ENCODE measurements at regions of chr18 and their contacts with region 1.

Region 1: DNA sequence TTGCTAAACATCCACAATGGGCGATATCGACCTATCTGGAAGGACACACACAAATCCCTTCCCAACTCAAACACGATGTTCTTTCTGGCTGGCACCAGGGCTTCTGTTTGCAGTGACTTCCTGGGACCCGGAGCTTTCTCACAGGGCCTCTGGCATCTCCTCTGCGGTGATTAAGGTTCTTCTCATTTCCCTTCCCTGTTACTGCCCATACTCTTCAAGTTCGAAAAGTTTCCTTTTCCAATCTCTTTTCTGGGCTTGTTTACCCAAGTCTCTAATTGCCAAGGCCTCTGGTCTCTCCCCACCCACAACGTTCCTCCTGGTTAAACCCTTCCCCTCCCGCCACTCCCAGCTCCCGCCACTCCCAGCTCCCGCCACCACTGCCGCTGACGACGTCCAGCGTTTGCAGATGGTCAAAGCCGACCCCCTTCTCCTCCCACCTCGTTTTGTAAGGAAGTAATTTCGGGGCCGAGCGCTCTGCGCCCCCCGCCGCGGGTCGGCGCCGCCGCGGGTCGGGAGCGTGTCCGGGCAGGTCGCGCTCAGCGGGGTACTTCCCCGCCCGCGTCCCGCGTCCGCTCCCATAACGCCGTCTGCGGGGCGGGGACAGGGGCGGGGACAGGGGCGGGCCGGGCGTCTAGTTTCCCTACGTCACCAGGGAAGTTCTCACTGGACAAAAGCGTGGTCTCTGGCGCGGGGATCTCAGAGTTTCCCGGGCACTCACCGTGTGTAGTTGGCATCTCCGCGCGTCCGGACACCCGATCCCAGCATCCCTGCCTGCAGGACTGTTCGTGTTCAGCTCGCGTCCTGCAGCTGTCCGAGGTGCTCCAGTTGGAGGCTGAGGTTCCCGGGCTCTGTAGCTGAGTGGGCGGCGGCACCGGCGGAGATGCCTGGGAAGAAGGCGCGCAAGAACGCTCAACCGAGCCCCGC is at the start of gene PMAIP1:
- DNase-seq: peak; percentile 94
- H3K4me3 Mint-ChIP-seq: peak within 1 kb of the TSS; percentile 96
- H3K27ac Mint-ChIP-seq: peak within 1 kb of the TSS; percentile 99
- H3K4me1 Mint-ChIP-seq: peaks cover 31% of the 10 kb centered on the region
- H3K27me3 Mint-ChIP-seq: no peaks in the 10 kb centered on the region
- total RNA-seq, gene PMAIP1: 97.6 to 104 TPM

Region 2: DNA sequence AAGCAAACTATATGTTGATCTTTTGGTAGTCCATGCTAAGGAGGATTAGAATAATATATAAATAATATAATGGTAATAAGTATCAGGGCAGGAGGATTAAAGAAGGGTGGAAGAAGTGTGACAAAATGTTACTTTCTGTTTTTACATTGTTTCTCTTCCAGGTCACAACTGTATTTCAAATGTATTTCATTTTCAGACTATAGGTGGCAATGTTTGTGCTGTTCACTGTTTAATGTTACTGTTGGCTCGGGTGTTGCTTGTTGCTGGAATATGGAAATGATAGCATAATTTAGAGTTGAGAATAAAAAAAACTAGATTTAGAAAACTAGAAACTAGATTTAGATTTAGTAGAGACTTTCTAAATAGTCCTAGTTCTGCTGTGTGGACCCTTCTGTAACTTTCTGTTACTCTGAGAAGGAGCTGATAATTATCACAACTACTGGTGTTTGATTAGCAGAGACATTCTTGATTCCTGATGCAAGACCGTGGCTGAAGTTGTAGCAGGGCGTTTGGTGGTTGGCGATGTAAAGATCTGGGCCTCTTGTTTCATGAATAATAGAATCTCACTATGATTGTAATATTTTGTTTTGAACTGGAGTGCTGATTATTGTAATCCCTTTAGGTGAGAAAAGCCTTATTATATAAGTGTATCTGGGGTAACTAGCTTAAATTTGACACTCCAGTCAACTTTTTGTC is 1847.6 kb before region 1 on chr18:
- CTCF ChIA-PET with region 1: no interaction called
- POLR2A ChIA-PET with region 1: no interaction called
- intact Hi-C with region 1: no loop called
- DNase-seq: no peak
- H3K4me3 Mint-ChIP-seq: no peak overlapping the region
- H3K27ac Mint-ChIP-seq: no peak overlapping the region
- H3K4me1 Mint-ChIP-seq: peaks cover 10% of the 10 kb centered on the region
- H3K27me3 Mint-ChIP-seq: no peaks in the 10 kb centered on the region

Region 3: GRCh38 chr18:59358712-59359575 is 540.6 kb before region 1 on chr18 and contains the start of gene LMAN1:
- CTCF ChIA-PET with region 1: no interaction called
- POLR2A ChIA-PET with region 1: interaction called, 7 read pairs
- intact Hi-C with region 1: loop called (anchors 1 kb)
- DNase-seq: peak; percentile 97
- H3K4me3 Mint-ChIP-seq: peak within 1 kb of the TSS; percentile 83
- H3K27ac Mint-ChIP-seq: peak within 1 kb of the TSS; percentile 94
- H3K4me1 Mint-ChIP-seq: peaks cover 26% of the 10 kb centered on the region
- H3K27me3 Mint-ChIP-seq: no peaks in the 10 kb centered on the region
- total RNA-seq, gene LMAN1: 155 to 158 TPM

Region 4: GRCh38 chr18:59846814-59847490 is 52.6 kb before region 1 on chr18:
- CTCF ChIA-PET with region 1: interaction called, 6 read pairs
- POLR2A ChIA-PET with region 1: interaction called, 11 read pairs
- intact Hi-C with region 1: loop called (anchors 1 kb)
- DNase-seq: peak; percentile 80
- H3K4me3 Mint-ChIP-seq: no peak overlapping the region
- H3K27ac Mint-ChIP-seq: peak overlapping the region; percentile 74
- H3K4me1 Mint-ChIP-seq: peaks cover 16% of the 10 kb centered on the region
- H3K27me3 Mint-ChIP-seq: peaks cover 1% of the 10 kb centered on the region

Region 5: GRCh38 chr18:59927246-59927825 is 27.8 kb after region 1 on chr18:
- CTCF ChIA-PET with region 1: interaction called, 5 read pairs
- POLR2A ChIA-PET with region 1: interaction called, 34 read pairs
- intact Hi-C with region 1: loop called (anchors 1 kb)
- DNase-seq: peak; percentile 72
- H3K4me3 Mint-ChIP-seq: no peak overlapping the region
- H3K27ac Mint-ChIP-seq: peak overlapping the region; percentile 75
- H3K4me1 Mint-ChIP-seq: peaks cover 37% of the 10 kb centered on the region
- H3K27me3 Mint-ChIP-seq: peaks cover 2% of the 10 kb centered on the region

Region 6: GRCh38 chr18:59957971-59958595 is 58.5 kb after region 1 on chr18:
- CTCF ChIA-PET with region 1: interaction called, 10 read pairs
- POLR2A ChIA-PET with region 1: interaction called, 65 read pairs
- intact Hi-C with region 1: loop called (anchors 1 kb)
- DNase-seq: peak; percentile 21
- H3K4me3 Mint-ChIP-seq: no peak overlapping the region
- H3K27ac Mint-ChIP-seq: no peak overlapping the region
- H3K4me1 Mint-ChIP-seq: peaks cover 23% of the 10 kb centered on the region
- H3K27me3 Mint-ChIP-seq: peaks cover 5% of the 10 kb centered on the region